Heart right ventricle (tissue), 16 donors: ENCODE measurements at regions of chr17 and their contacts with region 1.

Region 1: DNA sequence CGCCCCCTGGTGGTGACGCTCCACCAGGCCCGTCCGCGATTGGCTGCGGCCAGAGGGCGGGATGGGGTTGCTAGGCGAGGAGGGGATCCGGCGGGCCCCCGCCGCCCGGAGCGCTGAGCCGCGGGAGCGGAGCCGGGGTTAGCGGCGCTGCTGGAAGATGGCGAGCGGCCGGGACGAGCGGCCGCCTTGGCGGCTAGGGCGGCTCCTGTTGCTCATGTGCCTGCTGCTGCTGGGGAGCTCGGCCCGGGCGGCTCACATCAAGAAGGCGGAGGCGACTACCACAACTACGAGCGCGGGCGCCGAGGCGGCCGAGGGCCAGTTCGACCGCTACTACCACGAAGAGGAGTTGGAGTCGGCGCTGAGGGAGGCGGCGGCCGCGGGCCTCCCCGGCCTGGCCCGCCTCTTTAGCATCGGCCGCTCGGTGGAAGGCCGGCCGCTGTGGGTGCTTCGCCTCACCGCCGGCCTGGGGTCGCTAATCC is at the start of gene CPD:
- DNase-seq: peak; percentile 97 to 98
- ATAC-seq: peak; percentile 98 to 99 (median 99)
- H3K4me3 ChIP-seq: peak within 1 kb of the TSS; percentile 74 to 93 (median 90)
- H3K27ac ChIP-seq: peak within 1 kb of the TSS; percentile 65 to 93 (median 86)
- H3K4me1 ChIP-seq: peaks cover 11 to 65% (median 48%) of the 10 kb centered on the region in 9 donors
- H3K27me3 ChIP-seq: no peaks in the 10 kb centered on the region
- CTCF ChIP-seq: peak in 3 of 9 donors; percentile 22 to 29 (median 28)
- total RNA-seq, gene CPD: 20.4 to 44.0 (median 23.0) TPM

Region 2: DNA sequence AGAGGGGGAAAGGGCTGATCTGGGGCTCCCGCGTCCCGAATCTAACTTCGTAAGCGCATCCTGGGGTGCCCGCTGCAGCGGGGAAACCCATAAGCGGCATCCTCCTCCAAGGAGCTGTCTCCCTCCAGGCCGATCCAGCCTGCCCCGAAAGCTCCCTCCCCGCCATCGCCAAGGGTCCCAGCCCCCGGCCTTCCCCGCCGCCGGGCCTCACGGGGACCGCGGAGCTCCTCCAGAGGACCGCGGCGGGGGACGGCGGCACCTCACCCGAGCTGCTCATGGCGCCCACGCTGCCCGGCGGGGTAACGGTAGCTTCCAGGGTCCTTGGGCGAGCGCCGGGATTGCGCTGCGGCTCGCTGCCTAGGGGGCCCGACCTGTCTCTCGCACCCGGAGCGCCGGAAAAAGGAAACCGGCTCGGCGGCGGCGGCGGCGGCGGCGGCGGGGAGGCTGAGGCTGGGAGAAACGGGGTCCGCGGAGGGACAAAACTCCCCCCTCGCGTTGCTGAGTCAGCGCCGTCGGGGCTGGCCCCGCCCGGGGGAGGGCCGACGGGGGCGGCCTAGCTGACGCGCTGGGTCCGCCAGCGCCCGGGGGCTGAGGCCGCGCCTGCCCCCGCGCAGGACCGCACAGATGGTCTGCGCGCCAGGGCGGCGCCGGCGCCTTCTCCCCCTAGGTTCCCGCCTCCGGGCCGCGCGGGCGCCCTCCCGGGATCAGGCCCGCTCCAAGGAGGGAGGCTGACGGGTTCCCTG is 87.1 kb before region 1 on chr17 and contains the start of gene BLMH:
- intact Hi-C with region 1: loop called in 1 of 10 experiments (anchors 10 kb)
- DNase-seq: peak; percentile 86 to 89
- ATAC-seq: peak; percentile 94 to 99 (median 98)
- H3K4me3 ChIP-seq: peak within 1 kb of the TSS; percentile 66 to 98 (median 94)
- H3K27ac ChIP-seq: peak within 1 kb of the TSS in 9 of 10 donors; percentile 64 to 89 (median 81)
- H3K4me1 ChIP-seq: peaks cover 4 to 20% (median 15%) of the 10 kb centered on the region in 9 donors
- H3K27me3 ChIP-seq: no peaks in the 10 kb centered on the region
- CTCF ChIP-seq: no peak
- total RNA-seq, gene BLMH: 13.7 to 22.2 (median 15.9) TPM